ENCODE measurements at regions of chr17 and their contacts with region 1.

Region 1: DNA sequence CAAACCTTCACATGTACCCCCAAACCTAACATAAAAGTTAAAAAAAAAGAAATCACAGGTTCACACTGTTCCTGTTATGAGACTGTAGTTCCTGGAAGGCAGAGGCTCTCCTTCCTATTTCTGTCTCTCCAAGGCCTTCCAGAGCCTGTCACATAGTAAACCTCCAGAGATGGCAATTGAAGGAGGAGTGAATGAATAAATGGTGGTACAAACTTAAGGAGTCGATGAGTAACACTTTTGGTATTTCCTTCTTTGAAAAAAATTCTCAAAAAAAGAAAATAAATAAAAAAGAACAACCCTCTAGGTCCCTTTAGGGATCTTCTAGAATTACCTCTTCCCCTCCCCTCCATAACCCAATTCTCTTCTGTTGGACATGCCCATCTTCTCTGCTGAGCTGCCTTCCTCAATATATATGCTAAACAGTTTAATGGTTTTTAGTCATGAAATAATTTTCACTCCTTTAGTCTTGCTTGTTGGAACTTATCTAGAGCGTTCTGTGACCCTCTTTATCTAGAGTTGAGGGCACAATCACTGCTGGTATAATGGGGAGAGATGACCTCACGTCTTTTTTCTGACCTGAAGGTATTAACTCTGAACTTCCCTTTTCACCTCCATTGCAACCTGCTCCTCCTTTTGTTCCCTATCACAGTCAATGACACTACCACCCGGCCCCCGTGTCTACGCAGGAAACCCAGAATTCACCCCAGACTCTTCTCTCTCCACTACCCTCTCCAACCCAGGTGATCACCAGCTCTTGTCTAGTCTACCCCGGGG is 1.7 kb upstream of the TAF15 start:
- DNase-seq: no peak
- H3K4me3 ChIP-seq: no peak overlapping the region
- CTCF ChIP-seq: no peak
- POLR2A ChIP-seq: no peak

Region 2: DNA sequence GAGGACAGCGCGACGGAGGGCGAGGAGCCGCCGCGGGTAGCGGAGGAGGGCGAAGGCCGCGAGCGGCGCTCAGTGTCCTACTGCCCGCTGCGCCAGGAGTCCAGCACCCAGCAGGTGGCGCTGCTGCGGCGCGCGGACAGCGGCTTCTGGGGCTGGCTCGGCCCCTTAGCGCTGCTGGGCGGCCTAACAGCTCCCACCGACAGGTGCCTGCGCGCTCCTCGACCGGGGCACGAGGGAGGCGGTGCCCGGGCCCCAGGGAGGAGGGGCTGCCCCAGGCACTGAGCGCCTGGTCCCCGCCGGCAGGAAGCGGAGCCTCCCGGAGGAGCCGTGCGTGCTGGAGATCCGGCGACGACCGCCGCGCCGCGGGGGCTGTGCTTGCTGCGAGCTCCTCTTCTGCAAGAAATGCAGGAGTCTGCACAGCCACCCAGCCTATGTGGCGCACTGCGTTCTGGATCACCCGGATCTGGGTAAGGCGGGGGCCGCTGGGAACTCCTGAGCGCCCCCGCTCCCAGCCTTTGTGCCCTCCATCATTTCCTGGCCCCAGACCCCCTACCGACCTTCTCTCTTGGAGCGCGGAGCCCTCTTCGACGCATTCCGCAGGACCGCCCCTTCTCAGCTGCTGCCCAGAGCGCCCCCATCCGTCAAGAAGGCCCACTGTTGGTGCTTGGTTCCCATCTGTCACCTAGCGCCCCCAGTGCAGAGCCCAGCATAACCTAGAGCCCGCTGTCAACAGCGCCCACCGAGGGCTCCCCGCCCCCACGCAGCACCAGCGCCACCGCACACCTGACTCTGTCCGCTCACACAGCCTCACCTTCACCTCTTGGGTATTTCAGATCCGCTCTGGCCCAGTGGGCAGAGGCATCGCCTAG is 43.2 kb before region 1 on chr17:
- intact Hi-C with region 1: loop called (anchors 2 kb)
- DNase-seq: peak; percentile 47 to 96
- H3K4me3 ChIP-seq: no peak overlapping the region
- CTCF ChIP-seq: peak in 1 of 3 donors; percentile 81
- POLR2A ChIP-seq: no peak

Region 3: DNA sequence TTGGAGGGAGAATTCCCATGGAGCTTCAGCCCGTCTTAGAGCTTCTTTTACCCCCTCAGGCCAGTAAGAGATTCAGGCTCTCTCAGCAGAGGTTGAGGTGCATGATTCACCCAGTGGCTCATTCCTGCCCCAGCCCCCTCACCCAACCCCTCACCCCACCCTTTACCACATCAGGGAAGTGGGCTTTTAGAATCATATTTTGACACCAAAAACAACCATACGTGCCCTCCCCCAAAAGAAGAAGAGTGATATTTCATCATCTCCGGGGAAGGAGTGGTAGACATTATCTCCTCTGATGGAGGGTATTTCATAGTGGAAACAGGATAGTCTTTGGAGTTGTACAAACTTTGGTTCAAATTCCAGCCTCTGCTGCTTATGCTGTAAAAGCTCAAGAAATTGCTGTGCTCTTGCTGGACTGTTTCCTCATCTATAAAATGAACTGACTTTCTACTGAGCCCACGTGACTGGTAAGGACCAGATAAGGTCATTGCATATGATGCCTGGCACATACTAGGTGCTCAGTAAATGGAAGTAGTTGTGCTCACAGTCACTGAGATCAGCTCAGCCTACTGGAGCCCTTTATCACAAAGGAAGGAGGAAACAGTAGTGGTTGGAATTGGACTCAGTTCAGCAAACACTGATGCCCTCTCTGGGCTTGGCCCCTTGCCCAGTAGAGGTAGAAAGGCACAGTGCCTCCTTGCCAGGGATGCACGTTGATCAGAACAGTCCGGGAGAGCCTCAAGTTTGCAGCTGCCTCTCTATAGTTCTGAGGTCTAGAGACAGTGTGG is 90.9 kb after region 1 on chr17:
- intact Hi-C with region 1: no loop called
- DNase-seq: no peak
- H3K4me3 ChIP-seq: no peak overlapping the region
- CTCF ChIP-seq: no peak
- POLR2A ChIP-seq: no peak

Measured in lower leg skin (tissue), 4 donors.